Heart right ventricle (tissue), 16 donors: ENCODE measurements at regions of chr16 and their contacts with region 1.

Region 1: GRCh38 chr16:11396241-11397048 is 51.2 kb downstream of the RMI2 start:
- DNase-seq: peak; percentile 70 to 71
- ATAC-seq: peak; percentile 77 to 87 (median 82)
- H3K4me3 ChIP-seq: no peak overlapping the region
- H3K27ac ChIP-seq: peak overlapping the region in 5 of 10 donors; percentile 13 to 55 (median 45)
- H3K4me1 ChIP-seq: peaks cover 0 to 7% (median 5%) of the 10 kb centered on the region in 9 donors
- H3K27me3 ChIP-seq: no peaks in the 10 kb centered on the region
- CTCF ChIP-seq: peak; percentile 95 to 100 (median 99)

Region 2: DNA sequence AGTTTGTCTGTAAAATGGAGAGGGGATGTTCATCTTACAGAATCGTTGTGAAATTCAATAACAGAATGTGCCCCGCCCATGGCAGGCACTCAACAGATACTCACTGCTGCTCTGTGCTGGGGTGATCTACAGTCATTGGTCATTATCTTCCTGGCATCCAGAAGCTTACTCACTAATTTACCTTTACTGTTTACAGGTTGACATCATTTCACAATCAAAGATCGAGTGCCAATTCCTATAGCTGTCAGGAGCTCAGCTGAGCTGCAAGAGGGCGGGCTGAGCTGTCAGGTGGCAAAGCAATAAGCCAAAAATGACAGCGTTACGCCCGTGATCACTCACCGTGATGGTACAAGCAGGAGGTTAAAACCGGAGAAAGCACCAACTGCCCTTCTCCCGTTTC is 139.0 kb after region 1 on chr16:
- intact Hi-C with region 1: loop called in 2 of 10 experiments (anchors 5 to 10 kb)
- DNase-seq: no peak
- ATAC-seq: no peak
- H3K4me3 ChIP-seq: no peak overlapping the region
- H3K27ac ChIP-seq: no peak overlapping the region
- H3K4me1 ChIP-seq: peaks cover 0 to 13% (median 0%) of the 10 kb centered on the region in 9 donors
- H3K27me3 ChIP-seq: no peaks in the 10 kb centered on the region
- CTCF ChIP-seq: no peak

Region 3: GRCh38 chr16:11806721-11807120 is 410.3 kb after region 1 on chr16:
- intact Hi-C with region 1: loop called in 8 of 10 experiments (anchors 5 to 10 kb)
- DNase-seq: no peak
- ATAC-seq: no peak
- H3K4me3 ChIP-seq: no peak overlapping the region
- H3K27ac ChIP-seq: no peak overlapping the region
- H3K4me1 ChIP-seq: peaks cover 0 to 3% (median 0%) of the 10 kb centered on the region in 9 donors
- H3K27me3 ChIP-seq: no peaks in the 10 kb centered on the region
- CTCF ChIP-seq: no peak

Region 4: GRCh38 chr16:11819798-11820197 is 423.4 kb after region 1 on chr16:
- intact Hi-C with region 1: loop called in 8 of 10 experiments (anchors 5 to 10 kb)
- DNase-seq: no peak
- ATAC-seq: no peak
- H3K4me3 ChIP-seq: no peak overlapping the region
- H3K27ac ChIP-seq: no peak overlapping the region
- H3K4me1 ChIP-seq: peaks cover 0 to 23% (median 7%) of the 10 kb centered on the region in 9 donors
- H3K27me3 ChIP-seq: no peaks in the 10 kb centered on the region
- CTCF ChIP-seq: no peak